ENCODE measurements at regions of chr6 and their contacts with region 1.

Region 1: GRCh38 chr6:33579828-33580714 is at the start of gene BAK1:
- DNase-seq: peak; percentile 94
- H3K4me3 ChIP-seq: peak within 1 kb of the TSS; percentile 96
- H3K27ac ChIP-seq: peak within 1 kb of the TSS; percentile 75
- H3K4me1 ChIP-seq: peaks cover 12% of the 10 kb centered on the region
- H3K27me3 ChIP-seq: no peaks in the 10 kb centered on the region
- total RNA-seq, gene BAK1: 18.8 and 22.5 TPM in 2 replicates

Region 2: DNA sequence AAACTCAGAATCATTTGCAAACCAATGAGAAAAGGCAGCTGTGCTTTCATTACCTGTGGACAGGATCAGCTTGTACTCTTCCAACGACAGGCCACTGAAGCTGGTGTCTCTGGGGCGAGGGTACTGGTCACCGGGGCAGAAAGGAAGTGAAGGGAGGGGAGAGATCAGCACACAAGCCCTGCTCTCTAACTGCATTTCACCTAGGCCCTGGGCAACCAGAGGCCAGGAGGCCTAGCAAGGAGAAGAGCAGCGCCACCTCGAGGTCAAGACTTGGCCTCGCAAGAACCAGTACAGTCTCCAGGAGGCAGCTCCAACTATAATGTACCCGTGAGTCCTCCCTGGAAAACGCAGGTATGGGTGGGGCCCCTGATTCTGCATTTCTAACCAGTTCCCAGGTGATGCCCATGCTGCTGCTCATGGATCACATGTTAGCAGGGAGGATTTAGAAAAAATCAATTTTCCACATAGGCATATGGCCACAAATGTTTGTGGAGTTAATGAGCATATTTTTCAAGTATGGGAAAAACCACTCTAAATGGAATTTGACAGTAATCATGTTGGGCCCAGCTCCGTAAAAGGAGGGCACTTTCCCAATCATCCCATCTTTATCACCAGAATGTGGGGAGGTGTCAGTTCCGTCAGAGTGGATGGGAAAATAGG is 120.5 kb after region 1 on chr6:
- in situ Hi-C with region 1: loop called (anchors 10 kb)
- DNase-seq: peak; percentile 87
- H3K4me3 ChIP-seq: no peak overlapping the region
- H3K27ac ChIP-seq: no peak overlapping the region
- H3K4me1 ChIP-seq: peaks cover 24% of the 10 kb centered on the region
- H3K27me3 ChIP-seq: no peaks in the 10 kb centered on the region

Region 3: GRCh38 chr6:33771146-33772081 is 191.3 kb after region 1 on chr6:
- in situ Hi-C with region 1: loop called (anchors 10 kb)
- DNase-seq: peak; percentile 97
- H3K4me3 ChIP-seq: peak overlapping the region; percentile 36; the same call in 1 of the 2 replicates
- H3K27ac ChIP-seq: peak overlapping the region; percentile 84
- H3K4me1 ChIP-seq: peaks cover 35% of the 10 kb centered on the region
- H3K27me3 ChIP-seq: no peaks in the 10 kb centered on the region

Region 4: GRCh38 chr6:34027445-34027936 is 447.4 kb after region 1 on chr6:
- in situ Hi-C with region 1: loop called (anchors 25 kb)
- DNase-seq: peak; percentile 70
- H3K4me3 ChIP-seq: no peak overlapping the region
- H3K27ac ChIP-seq: no peak overlapping the region
- H3K4me1 ChIP-seq: no peaks in the 10 kb centered on the region
- H3K27me3 ChIP-seq: no peaks in the 10 kb centered on the region; the same call in 1 of the 2 replicates